ENCODE measurements at regions of chr17 and their contacts with region 1.

Region 1: DNA sequence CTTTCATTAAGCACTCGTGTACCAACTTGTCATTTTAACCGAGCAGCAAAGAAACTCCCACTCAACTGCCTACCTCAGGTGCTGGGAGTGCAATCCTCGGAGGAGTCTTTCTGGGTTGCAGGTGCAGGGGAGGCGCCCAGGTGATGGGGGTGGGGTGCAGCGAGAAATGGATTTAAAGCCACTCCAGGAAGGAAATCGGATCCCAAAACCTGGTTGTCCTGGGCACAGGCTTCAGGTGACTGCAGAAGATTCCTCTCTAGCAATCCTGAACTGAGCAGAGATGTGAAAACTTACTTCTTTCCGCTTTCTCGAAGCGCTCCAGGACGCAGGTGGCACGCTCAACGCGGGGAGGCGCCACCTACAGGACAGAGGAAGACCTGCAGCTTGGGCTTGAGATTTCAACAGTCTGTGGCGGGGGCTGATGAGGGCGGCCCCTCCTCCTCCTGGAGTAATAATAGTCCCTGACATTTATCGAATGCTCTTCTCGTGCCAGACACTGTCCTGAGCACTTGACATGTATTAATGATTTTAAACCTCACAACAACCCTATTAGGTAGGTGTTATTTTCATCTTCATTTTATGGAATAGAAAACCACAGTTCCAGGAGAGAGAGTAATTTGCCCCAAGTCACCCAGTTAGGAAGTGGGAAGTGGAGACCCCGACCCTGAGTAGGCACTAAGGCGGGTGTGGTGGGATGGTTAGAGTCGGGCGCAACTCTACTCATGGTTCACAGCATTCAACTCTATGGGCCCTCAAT is 27.2 kb upstream of the SKAP1 start:
- DNase-seq: peak; percentile 84
- ATAC-seq: peak; percentile 75
- H3K4me3 Mint-ChIP-seq: peak overlapping the region; percentile 60
- H3K27ac Mint-ChIP-seq: peak overlapping the region; percentile 56
- H3K4me1 Mint-ChIP-seq: peaks cover 71% of the 10 kb centered on the region
- H3K27me3 Mint-ChIP-seq: no peaks in the 10 kb centered on the region

Region 2: DNA sequence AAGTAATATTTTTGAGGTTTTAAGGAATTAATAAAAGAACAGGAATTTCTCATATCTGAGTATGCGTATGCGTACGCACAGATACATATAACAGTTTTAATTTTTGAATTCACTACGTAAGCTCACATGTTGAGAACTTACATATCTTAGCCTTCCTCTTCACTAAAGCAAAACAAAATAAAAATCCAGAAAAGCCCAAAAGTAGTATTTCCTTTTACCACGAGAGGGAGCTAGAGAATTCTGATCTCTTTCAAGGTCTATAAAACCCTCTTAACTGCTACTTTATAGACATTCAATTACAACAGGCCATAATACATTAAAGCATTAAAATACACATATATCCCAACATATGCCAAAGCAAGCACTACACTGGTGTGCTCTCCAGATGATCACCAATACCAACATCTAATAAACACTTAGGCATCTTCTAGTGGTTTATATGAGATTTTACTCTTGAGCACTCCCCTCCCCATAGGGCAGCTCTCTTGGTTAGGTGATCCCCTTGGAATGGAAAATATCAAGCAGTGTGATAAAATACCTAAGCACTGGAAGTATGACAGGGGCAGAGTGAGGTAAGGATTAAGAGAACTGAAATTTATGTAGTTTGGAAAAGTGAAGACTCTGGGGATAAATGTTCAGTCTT is 121.3 kb before region 1 on chr17:
- CTCF ChIA-PET with region 1: interaction called, 11 read pairs
- DNase-seq: no peak
- ATAC-seq: peak; percentile 63
- H3K4me3 Mint-ChIP-seq: no peak overlapping the region
- H3K27ac Mint-ChIP-seq: no peak overlapping the region
- H3K4me1 Mint-ChIP-seq: peaks cover 15% of the 10 kb centered on the region
- H3K27me3 Mint-ChIP-seq: no peaks in the 10 kb centered on the region

Region 3: DNA sequence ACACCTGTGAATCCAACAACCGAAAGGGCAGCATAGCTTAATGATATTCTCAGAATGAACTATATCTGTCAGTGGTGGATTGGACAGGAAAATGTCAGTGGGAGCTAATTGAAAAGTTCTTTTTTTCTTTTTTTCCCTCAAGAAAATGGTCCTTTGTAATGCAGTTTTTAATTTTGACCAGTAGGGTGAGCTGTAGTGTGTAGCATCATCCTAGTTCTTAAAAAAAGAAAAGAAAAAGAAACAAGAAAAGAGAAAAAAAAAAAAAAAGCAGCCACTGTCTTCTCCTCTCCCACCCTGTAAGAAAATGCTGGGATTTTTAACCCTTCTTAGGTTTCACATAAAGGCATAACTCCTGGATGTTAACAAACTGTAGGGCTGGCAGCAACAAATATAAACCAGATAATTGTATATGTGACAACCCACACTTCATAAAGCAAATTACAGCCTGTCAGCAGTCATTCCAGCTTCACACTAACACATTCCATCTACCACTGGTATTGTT is 105.4 kb before region 1 on chr17:
- CTCF ChIA-PET with region 1: interaction called, 30 read pairs
- DNase-seq: no peak
- ATAC-seq: peak; percentile 30
- H3K4me3 Mint-ChIP-seq: no peak overlapping the region
- H3K27ac Mint-ChIP-seq: no peak overlapping the region
- H3K4me1 Mint-ChIP-seq: peaks cover 14% of the 10 kb centered on the region
- H3K27me3 Mint-ChIP-seq: no peaks in the 10 kb centered on the region

Region 4: GRCh38 chr17:48378238-48378637 is 79.0 kb before region 1 on chr17:
- CTCF ChIA-PET with region 1: interaction called, 11 read pairs
- DNase-seq: no peak
- ATAC-seq: no peak
- H3K4me3 Mint-ChIP-seq: no peak overlapping the region
- H3K27ac Mint-ChIP-seq: no peak overlapping the region
- H3K4me1 Mint-ChIP-seq: peaks cover 6% of the 10 kb centered on the region
- H3K27me3 Mint-ChIP-seq: no peaks in the 10 kb centered on the region

Region 5: DNA sequence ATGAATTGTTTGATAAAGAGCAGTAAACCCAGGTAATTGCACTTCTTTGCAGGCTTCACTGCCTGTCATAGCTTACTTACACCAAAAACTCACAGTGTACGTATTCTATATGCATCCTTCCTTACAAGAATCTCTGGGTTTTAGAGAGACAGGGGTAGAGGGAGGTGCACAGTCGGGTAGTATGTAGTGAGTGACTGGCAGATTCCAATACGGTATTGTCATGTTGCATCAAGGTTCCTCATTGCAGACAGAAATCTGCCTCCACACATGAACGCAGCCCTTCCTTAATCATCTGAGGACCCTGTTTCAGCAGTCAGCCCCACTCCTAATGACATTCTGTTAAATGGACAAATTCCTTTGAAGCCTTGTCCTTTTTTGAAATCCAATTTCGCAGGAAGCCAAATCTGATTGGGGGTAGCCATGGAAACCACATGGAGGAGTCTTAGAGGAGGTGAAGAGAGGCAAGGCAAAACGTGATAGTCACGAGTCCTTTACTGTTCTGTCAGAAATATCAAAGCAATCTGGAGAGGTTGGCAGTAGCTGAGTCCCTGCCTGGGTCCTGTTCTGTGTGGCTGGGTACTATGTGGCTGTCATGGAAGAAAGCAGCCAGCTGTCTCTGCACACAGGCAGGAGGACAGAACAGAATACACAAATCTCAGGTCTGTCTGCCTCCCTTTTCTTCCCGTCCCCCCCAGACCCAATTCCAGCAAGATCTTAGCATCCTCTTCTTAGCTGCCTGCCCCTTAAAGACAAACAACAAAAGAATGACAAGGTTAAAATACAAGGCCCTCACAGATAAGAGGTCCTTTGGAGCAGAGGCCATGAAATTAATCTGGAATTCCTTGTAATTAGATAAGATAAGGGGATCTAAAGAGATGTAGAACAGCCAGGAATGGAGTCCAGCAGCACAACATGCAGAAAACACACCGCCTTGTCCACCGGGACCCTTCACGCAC is 24.2 kb before region 1 on chr17:
- CTCF ChIA-PET with region 1: interaction called, 145 read pairs
- DNase-seq: no peak
- ATAC-seq: no peak
- H3K4me3 Mint-ChIP-seq: no peak overlapping the region
- H3K27ac Mint-ChIP-seq: no peak overlapping the region
- H3K4me1 Mint-ChIP-seq: peaks cover 41% of the 10 kb centered on the region
- H3K27me3 Mint-ChIP-seq: no peaks in the 10 kb centered on the region

Region 6: DNA sequence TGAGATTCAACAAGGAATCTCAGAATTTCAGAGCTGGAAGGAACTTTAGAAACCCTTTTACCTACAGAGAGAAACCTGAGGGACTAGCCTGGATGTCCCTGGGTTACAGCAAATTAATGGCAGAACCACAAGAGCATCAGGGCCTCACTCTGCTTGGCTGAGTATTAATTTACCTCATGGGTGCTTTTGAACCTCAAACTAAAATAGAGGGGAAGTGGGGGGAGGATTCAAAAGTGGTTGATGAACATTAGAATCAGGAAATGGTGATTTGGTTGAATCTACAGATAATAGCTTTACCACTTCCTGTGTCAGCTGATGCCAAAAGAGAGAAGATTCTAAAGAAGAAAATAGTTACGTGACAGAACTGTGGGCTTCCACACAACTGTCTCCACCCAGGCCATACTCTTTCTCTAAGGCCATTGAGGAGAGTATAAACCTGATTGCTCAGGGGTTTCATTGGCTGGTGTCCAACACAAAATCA is 16.0 kb before region 1 on chr17:
- CTCF ChIA-PET with region 1: interaction called, 145 read pairs
- DNase-seq: peak; percentile 72
- ATAC-seq: peak; percentile 71
- H3K4me3 Mint-ChIP-seq: peak overlapping the region; percentile 52
- H3K27ac Mint-ChIP-seq: peak overlapping the region; percentile 98
- H3K4me1 Mint-ChIP-seq: peaks cover 90% of the 10 kb centered on the region
- H3K27me3 Mint-ChIP-seq: no peaks in the 10 kb centered on the region

Region 7: DNA sequence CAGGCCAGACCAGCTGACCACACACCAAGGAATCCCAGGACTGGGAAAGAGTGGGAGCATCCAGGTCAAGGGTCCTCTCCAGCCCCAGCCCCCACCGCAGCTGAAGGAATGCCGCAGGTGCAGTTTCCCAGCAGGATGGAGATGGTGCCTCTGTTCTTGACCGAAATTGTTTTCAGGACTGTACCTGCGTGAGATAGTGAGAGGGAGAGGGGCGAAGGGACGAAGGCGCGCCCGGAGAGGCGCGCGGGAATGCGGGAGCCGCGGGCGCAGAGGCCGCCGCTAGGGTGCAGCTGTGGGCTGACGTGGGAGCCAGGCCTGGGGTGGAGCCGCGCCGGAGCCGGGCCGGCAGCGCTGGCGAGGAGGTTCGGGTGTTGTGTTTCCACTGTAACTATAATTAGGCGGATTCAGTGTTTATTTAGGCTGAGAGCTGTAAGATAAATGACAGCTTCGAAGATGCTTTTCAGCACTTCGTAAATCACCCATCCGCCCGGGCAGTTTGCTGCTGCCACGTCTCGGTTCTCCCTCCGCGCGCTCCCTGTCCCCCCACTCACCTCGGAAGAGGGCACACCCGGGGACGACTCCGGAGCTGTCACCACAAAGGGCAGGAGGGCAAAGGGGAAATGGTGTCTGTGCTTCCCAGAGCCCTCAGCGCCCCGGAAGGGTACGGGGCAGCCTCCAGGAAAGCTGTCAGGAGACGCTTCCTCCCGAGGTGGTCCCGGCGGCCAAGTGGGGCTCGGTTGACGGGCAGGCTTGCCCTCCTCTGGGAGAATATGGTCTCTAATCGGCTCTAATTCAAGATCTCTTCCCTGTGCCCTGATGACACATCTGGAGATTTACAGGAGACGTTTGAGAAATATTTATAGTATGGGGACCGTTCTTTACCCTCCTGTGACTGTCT is 35.4 kb after region 1 on chr17:
- CTCF ChIA-PET with region 1: interaction called, 14 read pairs
- DNase-seq: peak; percentile 76
- ATAC-seq: peak; percentile 95
- H3K4me3 Mint-ChIP-seq: peak overlapping the region; percentile 46
- H3K27ac Mint-ChIP-seq: peak overlapping the region; percentile 24
- H3K4me1 Mint-ChIP-seq: peaks cover 35% of the 10 kb centered on the region
- H3K27me3 Mint-ChIP-seq: peaks cover 16% of the 10 kb centered on the region

Region 8: GRCh38 chr17:48701864-48702532 is 244.7 kb after region 1 on chr17:
- CTCF ChIA-PET with region 1: no interaction called
- DNase-seq: no peak
- ATAC-seq: no peak
- H3K4me3 Mint-ChIP-seq: no peak overlapping the region
- H3K27ac Mint-ChIP-seq: no peak overlapping the region
- H3K4me1 Mint-ChIP-seq: no peaks in the 10 kb centered on the region
- H3K27me3 Mint-ChIP-seq: peaks cover 61% of the 10 kb centered on the region

Measured in activated CD8-positive, alpha-beta memory T cell treated with anti-CD3 and anti-CD28 coated beads, Interleukin-2, amount 10 ng/mL, durations not matched to agents 7 days and 5 days (primary cell).